Psoas muscle (tissue), 8 donors: ENCODE measurements at regions of chr1 and their contacts with region 1.

Region 1: DNA sequence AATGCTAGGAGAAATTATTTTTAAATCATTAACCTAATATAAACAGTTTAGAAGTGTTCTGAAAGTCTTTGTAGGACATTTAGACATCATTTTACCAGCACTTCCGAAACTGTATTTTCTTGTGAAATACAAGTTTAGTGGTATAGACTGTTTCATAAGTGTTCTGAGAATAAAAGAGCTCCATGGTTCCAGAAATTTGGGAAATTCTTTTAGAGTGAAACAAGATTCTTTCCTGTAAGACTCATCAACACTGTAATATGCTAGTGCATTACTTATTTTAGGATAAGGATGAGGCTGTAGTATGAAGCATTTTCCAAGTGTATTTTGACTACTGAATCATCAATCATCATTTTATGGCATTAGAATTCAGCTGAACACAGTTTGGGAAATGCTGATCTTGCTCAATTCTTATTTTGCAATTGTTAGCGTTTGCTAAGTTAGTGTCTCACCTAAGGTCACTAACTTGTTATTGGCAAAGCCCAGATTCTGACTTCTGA is 73.4 kb downstream of the CEP350 start:
- DNase-seq: no peak
- ATAC-seq: peak in 2 of 4 donors; percentile 26 to 33
- H3K4me3 ChIP-seq: no peak overlapping the region
- H3K27ac ChIP-seq: no peak overlapping the region
- H3K4me1 ChIP-seq: no peaks in the 10 kb centered on the region
- H3K27me3 ChIP-seq: no peaks in the 10 kb centered on the region
- CTCF ChIP-seq: no peak

Region 2: GRCh38 chr1:180070286-180070685 is 42.3 kb after region 1 on chr1:
- intact Hi-C with region 1: loop called in 1 of 2 experiments (anchors 10 kb)
- DNase-seq: no peak
- ATAC-seq: no peak
- H3K4me3 ChIP-seq: no peak overlapping the region
- H3K27ac ChIP-seq: no peak overlapping the region
- H3K4me1 ChIP-seq: no peaks in the 10 kb centered on the region
- H3K27me3 ChIP-seq: no peaks in the 10 kb centered on the region
- CTCF ChIP-seq: no peak